ENCODE measurements at regions of chr2 and their contacts with region 1.

Region 1: DNA sequence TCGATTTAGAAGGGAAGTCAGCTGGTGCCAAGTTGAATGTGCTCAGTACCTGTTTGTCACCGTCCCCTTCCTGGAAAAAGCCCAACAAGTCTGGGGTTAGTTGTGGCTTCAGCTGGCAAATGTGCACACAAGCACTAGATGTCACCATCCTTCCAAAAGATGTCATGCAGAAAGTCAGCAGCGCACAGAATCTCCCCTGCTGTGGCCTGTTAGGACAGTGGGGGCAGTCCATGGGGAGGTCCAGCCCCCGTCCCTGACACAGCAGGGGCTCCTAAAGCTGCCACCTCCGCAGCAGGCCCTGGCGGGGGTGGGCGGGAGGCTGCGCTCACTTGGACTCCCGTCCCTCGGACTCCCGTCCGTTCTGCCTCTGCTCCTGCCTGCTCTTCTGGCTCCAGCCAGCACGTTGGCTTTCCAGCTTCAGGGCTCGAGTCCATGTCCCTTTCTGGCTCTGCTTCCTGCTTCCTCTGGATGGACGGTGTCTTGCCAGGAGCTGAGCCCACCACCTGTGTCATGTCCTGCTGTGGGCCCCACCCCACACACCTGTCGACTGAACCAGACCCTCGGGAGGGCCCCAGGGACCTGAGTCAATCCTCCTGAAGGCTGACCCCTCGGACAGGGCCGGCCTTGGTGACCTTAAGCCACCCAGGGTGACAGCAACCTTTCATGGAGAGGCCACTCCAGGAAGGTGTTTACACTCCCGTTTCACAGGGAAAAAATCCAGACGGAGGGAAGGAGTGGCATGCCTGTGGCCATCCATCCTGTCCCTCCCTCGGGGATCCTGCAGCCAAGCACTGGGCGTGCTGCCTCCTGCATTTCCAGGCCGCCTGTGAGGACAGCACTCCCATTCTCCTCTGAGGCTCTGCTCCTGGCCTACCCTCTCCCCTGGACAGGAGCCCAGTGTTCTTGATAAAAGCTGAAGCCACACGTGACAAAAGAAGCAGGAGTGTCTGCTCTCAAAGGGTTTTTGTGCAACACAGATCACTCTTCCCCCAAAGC is 8.5 kb downstream of the RAB17 start:
- DNase-seq: peak in 7 of 9 donors; percentile 53 to 73 (median 62)
- ATAC-seq: peak; percentile 80
- H3K4me3 ChIP-seq: no peak overlapping the region
- H3K4me3 Mint-ChIP-seq: peak overlapping the region in 1 of 10 donors; percentile 9
- H3K27ac ChIP-seq: no peak overlapping the region
- H3K27ac Mint-ChIP-seq: peak overlapping the region in 6 of 9 donors; percentile 14 to 84 (median 56)
- H3K4me1 ChIP-seq: no peaks in the 10 kb centered on the region
- H3K4me1 Mint-ChIP-seq: peaks cover 0 to 6% (median 4%) of the 10 kb centered on the region in 7 donors
- H3K27me3 ChIP-seq: no peaks in the 10 kb centered on the region
- H3K27me3 Mint-ChIP-seq: peaks cover 0 to 3% (median 0%) of the 10 kb centered on the region in 5 donors

Region 2: DNA sequence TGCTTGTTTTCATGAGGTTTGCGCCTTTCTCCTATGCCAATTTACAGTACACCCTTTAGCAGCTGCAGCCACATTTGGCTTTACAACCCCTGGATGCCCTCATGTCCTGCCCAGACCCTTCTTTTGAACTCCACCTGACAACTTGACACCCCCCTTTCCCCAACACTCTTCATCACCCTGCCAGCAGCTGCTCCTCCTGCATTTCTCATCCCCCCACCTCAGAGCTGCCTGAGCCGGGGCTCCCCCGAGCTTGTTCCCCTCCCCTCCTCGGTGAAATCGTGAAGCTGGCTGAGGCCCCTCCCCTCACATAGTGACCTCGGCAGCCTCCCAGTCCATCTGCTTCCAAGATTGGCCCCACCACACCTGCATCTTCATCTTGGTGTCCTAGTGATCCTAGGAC is 85.8 kb after region 1 on chr2:
- CTCF ChIA-PET with region 1: interaction called, 7 read pairs
- POLR2A ChIA-PET with region 1: no interaction called
- intact Hi-C with region 1: loop called (anchors 1 kb)
- DNase-seq: no peak
- ATAC-seq: no peak
- H3K4me3 ChIP-seq: no peak overlapping the region
- H3K4me3 Mint-ChIP-seq: no peak overlapping the region
- H3K27ac ChIP-seq: no peak overlapping the region
- H3K27ac Mint-ChIP-seq: no peak overlapping the region
- H3K4me1 ChIP-seq: peaks cover 4% of the 10 kb centered on the region in 2 donors
- H3K4me1 Mint-ChIP-seq: peaks cover 0 to 13% (median 9%) of the 10 kb centered on the region in 7 donors
- H3K27me3 ChIP-seq: no peaks in the 10 kb centered on the region
- H3K27me3 Mint-ChIP-seq: peaks cover 0 to 38% (median 0%) of the 10 kb centered on the region in 5 donors

Region 3: DNA sequence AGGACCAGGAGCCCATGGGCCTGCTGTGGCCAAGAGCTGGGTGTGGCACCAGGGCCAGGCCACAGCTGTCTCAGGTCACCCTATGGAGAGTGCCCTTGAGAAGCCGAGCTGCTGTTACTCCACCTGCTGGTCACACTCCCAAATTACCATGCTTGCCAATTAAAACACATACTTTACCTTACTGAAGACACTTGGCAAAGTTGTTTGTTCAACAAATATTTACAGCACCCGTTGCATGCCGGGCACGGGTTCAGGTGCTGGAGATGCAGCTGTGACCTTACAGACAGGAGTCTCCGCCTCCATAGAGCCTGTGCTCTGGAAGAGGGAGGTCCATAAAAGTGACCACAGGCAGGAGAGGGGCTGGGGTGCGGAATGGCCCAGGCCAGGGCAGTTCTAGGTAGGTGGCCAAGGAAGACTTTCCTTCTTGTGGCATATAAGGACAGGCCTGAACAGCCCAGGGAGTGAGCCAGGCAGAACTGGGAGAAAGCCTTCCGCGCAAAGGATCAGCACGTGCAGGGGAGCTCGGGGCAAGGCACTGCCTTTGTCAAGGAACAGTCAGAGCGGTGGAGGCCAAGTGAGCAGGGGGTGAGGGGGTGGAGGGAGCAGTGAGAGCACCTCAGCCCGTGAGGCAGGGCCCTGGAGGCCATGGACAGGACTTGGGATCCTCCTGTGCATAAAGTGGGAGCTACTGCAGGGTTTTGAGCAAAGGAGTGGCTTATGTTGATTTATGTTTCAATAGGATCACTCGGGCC is 192.9 kb after region 1 on chr2:
- CTCF ChIA-PET with region 1: no interaction called
- POLR2A ChIA-PET with region 1: no interaction called
- intact Hi-C with region 1: loop called (anchors 1 kb)
- DNase-seq: peak in 7 of 9 donors; percentile 13 to 37 (median 26)
- ATAC-seq: peak; percentile 80
- H3K4me3 ChIP-seq: no peak overlapping the region
- H3K4me3 Mint-ChIP-seq: no peak overlapping the region
- H3K27ac ChIP-seq: no peak overlapping the region
- H3K27ac Mint-ChIP-seq: peak overlapping the region in 6 of 9 donors; percentile 21 to 82 (median 62)
- H3K4me1 ChIP-seq: no peaks in the 10 kb centered on the region
- H3K4me1 Mint-ChIP-seq: peaks cover 0 to 4% (median 0%) of the 10 kb centered on the region in 7 donors
- H3K27me3 ChIP-seq: no peaks in the 10 kb centered on the region
- H3K27me3 Mint-ChIP-seq: no peaks in the 10 kb centered on the region